ENCODE measurements at regions of chr10 and their contacts with region 1.

Region 1: GRCh38 chr10:73586583-73586984 is 4.6 kb downstream of the USP54 start:
- DNase-seq: peak; percentile 100
- ATAC-seq: peak; percentile 75
- H3K4me3 ChIP-seq: peak overlapping the region; percentile 19
- H3K27ac ChIP-seq: peak overlapping the region; percentile 66
- H3K4me1 ChIP-seq: peaks cover 68% of the 10 kb centered on the region
- H3K27me3 ChIP-seq: no peaks in the 10 kb centered on the region
- CTCF ChIP-seq: no peak

Region 2: DNA sequence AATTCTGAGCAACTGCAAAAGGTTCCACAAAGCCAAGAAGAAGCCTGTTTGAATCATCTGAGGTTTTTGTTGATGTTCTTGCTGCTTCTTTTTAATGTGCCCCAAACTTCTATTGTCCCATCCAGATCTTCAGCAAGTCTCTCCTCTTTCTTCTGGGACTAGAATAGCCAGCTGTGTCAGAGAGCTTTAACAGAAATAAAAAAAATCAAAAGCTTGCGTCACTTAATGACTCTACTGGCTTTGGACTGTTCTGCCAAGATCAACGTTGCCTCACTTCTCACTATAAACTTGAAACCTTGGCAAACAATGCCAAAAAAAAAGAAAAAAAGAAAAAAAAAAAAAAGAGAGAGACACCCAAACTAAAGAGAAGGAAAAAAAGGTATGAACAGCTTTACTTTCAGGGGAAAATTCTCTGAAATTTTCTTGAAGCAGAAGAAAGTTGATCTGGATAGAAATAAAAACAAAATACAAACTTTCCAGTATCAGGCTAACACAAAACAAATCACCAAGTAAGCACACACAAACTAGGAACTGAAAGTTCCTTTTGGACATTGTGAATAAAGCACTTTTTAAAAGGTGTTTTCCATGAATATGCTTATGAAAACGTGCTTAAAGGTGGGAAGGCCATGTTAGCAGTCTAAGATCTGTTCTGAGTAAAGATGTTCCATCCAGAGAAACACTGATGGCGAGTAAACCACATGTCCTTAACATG is 10.2 kb before region 1 on chr10:
- CTCF ChIA-PET with region 1: interaction called, 5 read pairs
- POLR2A ChIA-PET with region 1: interaction called, 12 read pairs
- intact Hi-C with region 1: loop called (anchors 1 kb)
- DNase-seq: peak; percentile 98
- ATAC-seq: peak; percentile 61
- H3K4me3 ChIP-seq: no peak overlapping the region
- H3K27ac ChIP-seq: peak overlapping the region; percentile 49
- H3K4me1 ChIP-seq: peaks cover 34% of the 10 kb centered on the region
- H3K27me3 ChIP-seq: no peaks in the 10 kb centered on the region
- CTCF ChIP-seq: no peak

Region 3: DNA sequence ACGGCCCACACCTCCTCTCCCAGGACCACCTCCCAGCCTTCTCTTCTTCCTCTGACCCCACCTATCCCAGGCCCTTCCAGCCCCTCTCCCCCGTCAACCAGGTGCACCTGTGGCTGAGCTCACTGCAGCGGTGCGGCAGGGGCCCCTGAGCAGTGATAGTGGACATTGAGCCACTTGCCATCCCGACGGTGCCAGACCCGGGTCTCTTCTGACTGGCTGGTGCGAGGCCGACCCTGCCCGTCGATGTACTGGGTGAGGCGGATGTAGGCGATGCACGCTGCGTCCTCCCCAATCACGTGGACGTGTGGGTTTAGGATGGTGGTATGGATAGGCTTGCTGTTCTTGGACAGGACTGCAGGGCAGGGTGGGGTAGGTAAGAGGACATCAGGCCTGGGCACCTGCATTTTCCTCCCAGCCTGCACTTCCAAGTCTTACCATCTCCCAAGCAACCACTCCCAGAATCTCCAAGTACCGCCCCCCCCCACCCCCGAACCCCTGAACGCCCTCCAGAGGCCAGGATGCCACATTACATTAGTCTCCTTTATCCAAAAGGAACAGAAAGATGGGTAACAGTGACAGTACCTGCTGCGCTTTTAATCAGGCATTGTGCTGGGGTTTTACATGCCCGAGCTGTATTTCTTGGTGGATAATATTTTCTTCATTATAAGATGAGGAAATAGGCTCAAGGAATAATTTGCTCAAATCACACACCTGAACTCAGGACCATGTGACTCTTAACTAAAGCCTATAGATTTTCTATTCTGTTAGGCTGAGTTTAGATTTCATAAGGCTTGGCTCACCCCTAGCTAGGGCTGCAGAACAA is 228.5 kb after region 1 on chr10:
- CTCF ChIA-PET with region 1: no interaction called
- POLR2A ChIA-PET with region 1: no interaction called
- intact Hi-C with region 1: no loop called
- DNase-seq: peak; percentile 71
- ATAC-seq: no peak
- H3K4me3 ChIP-seq: no peak overlapping the region
- H3K27ac ChIP-seq: no peak overlapping the region
- H3K4me1 ChIP-seq: peaks cover 17% of the 10 kb centered on the region
- H3K27me3 ChIP-seq: no peaks in the 10 kb centered on the region
- CTCF ChIP-seq: peak; percentile 89

Region 4: DNA sequence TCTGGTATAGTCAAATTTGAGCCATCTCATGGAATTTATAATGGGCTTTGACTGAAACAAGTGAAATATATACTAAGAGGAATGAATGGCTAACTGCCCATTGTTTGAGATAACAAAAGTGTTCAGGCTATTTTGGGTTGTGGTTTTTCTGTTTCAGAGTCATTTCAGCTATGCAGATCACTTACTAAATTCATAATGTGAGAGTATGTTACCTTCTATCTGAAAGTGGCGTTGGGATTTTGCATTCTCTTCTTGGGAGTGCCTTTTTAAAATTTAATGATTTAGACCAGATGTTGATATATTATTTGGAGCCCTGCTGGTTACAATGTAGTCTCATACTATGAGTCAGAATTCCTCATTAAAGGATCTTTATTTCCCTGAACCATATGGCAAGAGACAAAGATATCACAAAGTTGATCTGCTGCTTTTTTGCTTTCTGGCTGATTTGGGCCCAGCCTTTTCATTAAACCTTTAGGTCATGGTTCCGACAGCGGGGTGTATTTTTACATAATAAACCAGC is 421.7 kb after region 1 on chr10:
- CTCF ChIA-PET with region 1: no interaction called
- POLR2A ChIA-PET with region 1: no interaction called
- intact Hi-C with region 1: no loop called
- DNase-seq: peak; percentile 98
- ATAC-seq: peak; percentile 80
- H3K4me3 ChIP-seq: peak overlapping the region; percentile 1; the same call in 1 of the 2 replicates
- H3K27ac ChIP-seq: peak overlapping the region; percentile 54
- H3K4me1 ChIP-seq: peaks cover 68% of the 10 kb centered on the region
- H3K27me3 ChIP-seq: no peaks in the 10 kb centered on the region
- CTCF ChIP-seq: 0 out of 2 replicates have a peak, but pooled peaks have one; percentile 17